HepG2 (cell line): ENCODE measurements at regions of chr4 and their contacts with region 1.

Region 1: GRCh38 chr4:109815151-109816081 is at the start of gene GAR1:
- DNase-seq: peak; percentile 90
- ATAC-seq: peak; percentile 97
- H3K4me3 ChIP-seq: peak within 1 kb of the TSS; percentile 77 to 95 (median 84)
- H3K27ac ChIP-seq: peak within 1 kb of the TSS; percentile 91
- H3K4me1 ChIP-seq: peaks cover 47% of the 10 kb centered on the region
- H3K27me3 ChIP-seq: no peaks in the 10 kb centered on the region; a peak in 1 of 5 replicates
- CTCF ChIP-seq: no peak; the same call in 1 of the 2 replicates
- EP300 ChIP-seq: no peak
- POLR2A ChIP-seq: peak; percentile 43 to 73; a peak in 3 of 4 replicates
- RAD21 ChIP-seq: 0 out of 2 replicates have a peak, but pooled peaks have one; percentile 30
- total RNA-seq, gene GAR1: 11.3 and 16.4 TPM in 2 replicates

Region 2: DNA sequence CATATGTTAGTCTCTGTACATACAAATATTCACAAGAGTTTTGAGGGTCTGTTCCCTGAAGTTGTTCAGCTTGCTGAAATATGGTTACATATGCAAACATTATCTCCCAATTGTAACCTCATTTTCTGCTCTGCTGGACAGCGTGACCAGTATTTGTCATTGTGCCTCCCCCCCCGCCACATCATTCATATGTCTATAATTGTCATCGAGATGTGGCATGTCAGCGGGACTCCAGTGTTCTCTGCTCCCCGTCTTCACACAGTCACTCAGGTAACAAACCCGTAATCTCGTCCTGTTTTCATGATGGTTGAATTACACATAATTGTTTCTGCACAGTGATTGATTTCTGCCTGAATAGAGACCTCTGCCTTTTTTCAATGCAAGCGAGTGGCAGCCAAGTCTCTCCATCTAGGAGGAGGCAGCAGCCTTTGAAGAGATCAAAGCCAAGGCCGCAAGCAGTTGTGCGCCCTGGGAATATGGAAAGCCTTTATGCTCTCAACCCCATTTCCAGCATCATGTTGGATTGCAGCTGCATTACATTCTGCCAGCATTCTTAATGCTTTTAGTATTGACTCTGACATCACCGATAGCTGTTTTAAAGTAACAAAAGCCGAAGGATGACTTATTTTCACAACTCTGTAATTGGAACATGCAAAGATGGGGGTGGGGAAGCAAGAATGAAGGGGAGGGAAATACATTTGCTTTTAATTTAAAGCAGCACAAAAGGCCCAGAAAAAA is 1674.0 kb before region 1 on chr4:
- CTCF ChIA-PET with region 1: no interaction called
- POLR2A ChIA-PET with region 1: no interaction called
- in situ Hi-C with region 1: no loop called
- intact Hi-C with region 1: no loop called
- DNase-seq: no peak
- ATAC-seq: no peak
- H3K4me3 ChIP-seq: no peak overlapping the region
- H3K27ac ChIP-seq: no peak overlapping the region
- H3K4me1 ChIP-seq: no peaks in the 10 kb centered on the region
- H3K27me3 ChIP-seq: no peaks in the 10 kb centered on the region
- CTCF ChIP-seq: no peak
- EP300 ChIP-seq: no peak
- POLR2A ChIP-seq: no peak
- RAD21 ChIP-seq: no peak

Region 3: GRCh38 chr4:109433205-109434006 is 382.0 kb before region 1 on chr4 and contains the start of gene SEC24B:
- CTCF ChIA-PET with region 1: no interaction called
- POLR2A ChIA-PET with region 1: interaction called, 3 read pairs
- in situ Hi-C with region 1: no loop called
- intact Hi-C with region 1: loop called (anchors 5 kb)
- DNase-seq: peak; percentile 73
- ATAC-seq: peak; percentile 92
- H3K4me3 ChIP-seq: peak within 1 kb of the TSS; percentile 81 to 93 (median 86)
- H3K27ac ChIP-seq: peak within 1 kb of the TSS; percentile 81
- H3K4me1 ChIP-seq: peaks cover 43% of the 10 kb centered on the region
- H3K27me3 ChIP-seq: no peaks in the 10 kb centered on the region; a peak in 1 of 5 replicates
- CTCF ChIP-seq: peak; percentile 73
- EP300 ChIP-seq: no peak
- POLR2A ChIP-seq: peak; percentile 69 to 77
- RAD21 ChIP-seq: peak; percentile 86
- total RNA-seq, gene SEC24B: 14.6 and 22.9 TPM in 2 replicates

Region 4: DNA sequence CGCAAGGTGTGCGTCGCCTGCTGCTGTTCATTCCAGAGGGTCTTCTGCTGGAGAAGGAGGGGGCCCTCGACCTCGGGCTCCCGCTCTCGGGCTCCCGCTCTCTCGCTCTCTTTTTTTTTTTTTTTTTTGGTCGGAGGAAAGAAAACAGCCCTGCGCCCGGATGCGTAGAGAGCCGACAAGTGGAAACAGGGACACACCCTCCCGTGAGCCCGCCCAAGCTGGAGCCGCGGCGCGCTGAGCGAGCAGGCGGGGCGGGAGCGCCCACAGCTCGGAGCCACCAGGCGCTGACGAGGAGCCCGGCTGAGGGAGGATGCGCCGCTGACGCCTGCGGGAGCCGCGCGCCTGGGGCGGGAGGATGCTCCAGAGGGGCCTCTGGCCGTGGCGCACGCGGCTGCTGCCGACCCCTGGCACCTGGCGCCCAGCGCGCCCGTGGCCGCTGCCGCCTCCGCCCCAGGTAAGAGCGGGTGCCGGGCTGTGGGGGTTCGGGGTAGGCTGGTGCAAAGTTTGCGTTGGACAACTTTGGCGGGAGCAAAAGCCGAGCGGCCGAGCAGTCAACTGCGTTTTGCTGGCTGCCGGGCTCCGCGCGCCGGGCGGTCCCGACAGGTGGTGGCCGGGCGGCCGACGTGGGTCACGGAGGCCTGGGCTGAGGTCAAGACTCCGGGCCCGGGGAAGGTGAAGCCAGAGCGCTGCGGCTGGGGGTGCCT is 255.3 kb before region 1 on chr4 and contains the start of gene MCUB:
- CTCF ChIA-PET with region 1: no interaction called
- POLR2A ChIA-PET with region 1: no interaction called
- in situ Hi-C with region 1: loop called (anchors 25 kb)
- intact Hi-C with region 1: no loop called
- DNase-seq: peak; percentile 69
- ATAC-seq: peak; percentile 97
- H3K4me3 ChIP-seq: peak within 1 kb of the TSS; percentile 67 to 79 (median 69)
- H3K27ac ChIP-seq: peak within 1 kb of the TSS; percentile 17
- H3K4me1 ChIP-seq: peaks cover 12% of the 10 kb centered on the region
- H3K27me3 ChIP-seq: no peaks in the 10 kb centered on the region
- CTCF ChIP-seq: no peak
- EP300 ChIP-seq: no peak
- POLR2A ChIP-seq: no peak
- RAD21 ChIP-seq: no peak
- total RNA-seq, gene MCUB: 0.95 and 1.4 TPM in 2 replicates

Region 5: GRCh38 chr4:109702950-109703663 is 112.3 kb before region 1 on chr4 and contains the start of gene CASP6:
- CTCF ChIA-PET with region 1: no interaction called
- POLR2A ChIA-PET with region 1: no interaction called
- in situ Hi-C with region 1: no loop called
- intact Hi-C with region 1: loop called (anchors 5 kb)
- DNase-seq: peak; percentile 36
- ATAC-seq: peak; percentile 83
- H3K4me3 ChIP-seq: peak within 1 kb of the TSS; percentile 69 to 76 (median 69)
- H3K27ac ChIP-seq: peak within 1 kb of the TSS; percentile 68
- H3K4me1 ChIP-seq: peaks cover 37% of the 10 kb centered on the region
- H3K27me3 ChIP-seq: no peaks in the 10 kb centered on the region
- CTCF ChIP-seq: peak; percentile 49
- EP300 ChIP-seq: no peak
- POLR2A ChIP-seq: peak; percentile 29 to 64; a peak in 3 of 4 replicates
- RAD21 ChIP-seq: 0 out of 2 replicates have a peak, but pooled peaks have one; percentile 28
- total RNA-seq, gene CASP6: 34.6 and 42.4 TPM in 2 replicates

Region 6: GRCh38 chr4:109729718-109730618 is 85.4 kb before region 1 on chr4 and contains the start of gene PLA2G12A:
- CTCF ChIA-PET with region 1: no interaction called
- POLR2A ChIA-PET with region 1: interaction called, 3 read pairs
- in situ Hi-C with region 1: no loop called
- intact Hi-C with region 1: loop called (anchors 5 kb)
- DNase-seq: peak; percentile 68
- ATAC-seq: peak; percentile 96
- H3K4me3 ChIP-seq: peak within 1 kb of the TSS; percentile 79 to 91 (median 88)
- H3K27ac ChIP-seq: peak within 1 kb of the TSS; percentile 81
- H3K4me1 ChIP-seq: peaks cover 25% of the 10 kb centered on the region
- H3K27me3 ChIP-seq: no peaks in the 10 kb centered on the region; a peak in 2 of 5 replicates
- CTCF ChIP-seq: no peak
- EP300 ChIP-seq: no peak
- POLR2A ChIP-seq: peak; percentile 45 to 79; a peak in 2 of 4 replicates
- RAD21 ChIP-seq: peak; percentile 46; the same call in 1 of the 2 replicates
- total RNA-seq, gene PLA2G12A: 38.7 and 61.2 TPM in 2 replicates

Region 7: DNA sequence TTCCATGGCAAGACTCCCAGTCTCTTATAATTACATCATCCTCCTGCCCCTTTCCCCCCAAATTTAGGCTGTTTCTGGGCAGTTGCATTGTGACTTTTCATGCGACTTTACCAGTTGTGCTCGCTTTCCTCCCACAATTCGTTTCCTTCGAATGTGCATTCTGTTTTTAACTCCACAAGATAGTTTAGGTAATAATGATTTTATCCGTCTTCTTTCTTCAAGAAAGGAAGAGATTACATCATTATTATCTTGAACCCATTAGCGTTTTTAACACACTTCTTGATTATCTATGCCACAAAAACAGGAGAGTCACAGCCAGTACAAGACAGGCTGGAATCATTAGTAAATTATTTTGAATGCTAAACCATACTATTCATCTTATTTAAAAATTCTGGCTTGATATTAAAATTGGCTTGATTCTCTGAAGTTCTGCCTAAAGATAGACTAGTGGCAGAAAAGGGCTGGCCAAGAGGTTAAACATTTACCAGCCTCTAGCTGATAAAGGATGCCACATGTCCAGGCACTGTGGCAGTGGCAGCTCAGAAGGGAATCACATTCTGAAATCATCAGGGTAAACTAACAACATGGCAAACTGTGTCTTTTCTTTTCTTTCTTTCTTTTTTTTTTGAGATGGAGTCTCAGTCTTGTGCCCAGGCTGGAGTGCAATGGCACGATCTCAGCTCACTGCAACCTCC is 65.9 kb before region 1 on chr4:
- CTCF ChIA-PET with region 1: no interaction called
- POLR2A ChIA-PET with region 1: no interaction called
- in situ Hi-C with region 1: no loop called
- intact Hi-C with region 1: loop called (anchors 5 kb)
- DNase-seq: no peak
- ATAC-seq: no peak
- H3K4me3 ChIP-seq: no peak overlapping the region
- H3K27ac ChIP-seq: no peak overlapping the region
- H3K4me1 ChIP-seq: no peaks in the 10 kb centered on the region
- H3K27me3 ChIP-seq: no peaks in the 10 kb centered on the region; a peak in 1 of 5 replicates
- CTCF ChIP-seq: no peak
- EP300 ChIP-seq: no peak
- POLR2A ChIP-seq: no peak
- RAD21 ChIP-seq: no peak

Region 8: DNA sequence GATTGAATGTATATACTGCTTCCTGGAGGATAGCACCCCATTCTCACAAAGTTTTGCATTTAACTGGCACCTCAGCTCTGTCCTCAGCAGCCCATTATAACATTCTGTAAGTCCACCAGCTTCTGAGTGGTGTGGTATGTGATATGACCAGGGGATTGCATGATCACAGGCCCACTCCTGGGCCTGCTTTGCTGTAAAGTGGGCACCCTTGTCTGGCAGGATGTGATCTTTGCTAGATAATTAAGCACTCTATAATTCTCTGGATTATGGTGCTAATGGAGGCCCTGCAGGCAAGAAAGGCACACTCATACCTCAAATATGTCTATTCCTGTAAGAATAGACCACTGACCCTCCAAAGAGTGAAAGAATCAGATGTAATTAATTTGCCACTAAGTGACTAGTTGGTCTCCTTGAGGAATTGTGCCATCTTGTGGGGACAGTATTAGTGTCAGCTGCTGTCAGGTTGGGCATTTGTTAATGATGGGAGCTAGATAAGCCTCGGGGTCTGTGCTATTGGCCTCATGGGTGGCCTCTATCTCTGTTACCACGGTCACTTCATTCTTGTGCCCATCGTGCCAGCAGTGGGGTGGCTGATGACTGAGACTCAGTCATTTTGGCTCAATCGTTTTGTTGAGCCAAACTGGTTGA is 11.4 kb before region 1 on chr4:
- CTCF ChIA-PET with region 1: no interaction called
- POLR2A ChIA-PET with region 1: interaction called, 13 read pairs
- in situ Hi-C with region 1: no loop called
- intact Hi-C with region 1: loop called (anchors 1 kb)
- DNase-seq: peak; percentile 57
- ATAC-seq: peak; percentile 79
- H3K4me3 ChIP-seq: no peak overlapping the region
- H3K27ac ChIP-seq: no peak overlapping the region
- H3K4me1 ChIP-seq: peaks cover 55% of the 10 kb centered on the region
- H3K27me3 ChIP-seq: no peaks in the 10 kb centered on the region
- CTCF ChIP-seq: peak; percentile 80
- EP300 ChIP-seq: no peak
- POLR2A ChIP-seq: no peak
- RAD21 ChIP-seq: peak; percentile 45

Region 9: DNA sequence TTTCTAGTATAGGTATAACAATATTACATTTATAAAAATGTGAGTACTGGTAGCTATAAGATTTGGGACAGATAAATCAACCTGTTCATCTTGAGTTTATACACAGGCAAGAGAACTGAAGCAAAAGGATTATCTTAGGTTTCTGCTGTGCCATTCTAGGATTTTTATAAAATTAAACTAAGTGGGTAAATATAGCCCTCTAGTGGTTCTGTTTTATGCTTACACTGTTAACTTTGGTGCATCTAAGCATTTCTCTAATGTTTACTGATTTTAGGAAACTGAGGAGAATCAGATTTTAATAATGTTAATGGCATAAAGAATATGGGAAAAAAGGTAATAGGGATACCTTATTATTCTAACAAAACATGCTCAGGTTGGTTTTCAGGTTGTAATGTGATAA is 11.3 kb after region 1 on chr4:
- CTCF ChIA-PET with region 1: no interaction called
- POLR2A ChIA-PET with region 1: no interaction called
- in situ Hi-C with region 1: no loop called
- intact Hi-C with region 1: no loop called
- DNase-seq: no peak
- ATAC-seq: peak; percentile 57; the same call in 2 of the 3 replicates
- H3K4me3 ChIP-seq: no peak overlapping the region
- H3K27ac ChIP-seq: no peak overlapping the region
- H3K4me1 ChIP-seq: no peaks in the 10 kb centered on the region
- H3K27me3 ChIP-seq: no peaks in the 10 kb centered on the region
- CTCF ChIP-seq: peak; percentile 38
- EP300 ChIP-seq: no peak
- POLR2A ChIP-seq: no peak
- RAD21 ChIP-seq: no peak